Motor neuron (in vitro differentiated cells): ENCODE measurements at regions of chr9 and their contacts with region 1.

Region 1: GRCh38 chr9:81848472-81848871 is 79.8 kb upstream of the SPATA31D4 start:
- ATAC-seq: peak in 1 of 8 experiments; percentile 26
- H3K4me3 ChIP-seq: no peak overlapping the region
- H3K27ac ChIP-seq: no peak overlapping the region
- H3K4me1 ChIP-seq: peaks cover 3 to 6% of the 10 kb centered on the region in 2 donors

Region 2: DNA sequence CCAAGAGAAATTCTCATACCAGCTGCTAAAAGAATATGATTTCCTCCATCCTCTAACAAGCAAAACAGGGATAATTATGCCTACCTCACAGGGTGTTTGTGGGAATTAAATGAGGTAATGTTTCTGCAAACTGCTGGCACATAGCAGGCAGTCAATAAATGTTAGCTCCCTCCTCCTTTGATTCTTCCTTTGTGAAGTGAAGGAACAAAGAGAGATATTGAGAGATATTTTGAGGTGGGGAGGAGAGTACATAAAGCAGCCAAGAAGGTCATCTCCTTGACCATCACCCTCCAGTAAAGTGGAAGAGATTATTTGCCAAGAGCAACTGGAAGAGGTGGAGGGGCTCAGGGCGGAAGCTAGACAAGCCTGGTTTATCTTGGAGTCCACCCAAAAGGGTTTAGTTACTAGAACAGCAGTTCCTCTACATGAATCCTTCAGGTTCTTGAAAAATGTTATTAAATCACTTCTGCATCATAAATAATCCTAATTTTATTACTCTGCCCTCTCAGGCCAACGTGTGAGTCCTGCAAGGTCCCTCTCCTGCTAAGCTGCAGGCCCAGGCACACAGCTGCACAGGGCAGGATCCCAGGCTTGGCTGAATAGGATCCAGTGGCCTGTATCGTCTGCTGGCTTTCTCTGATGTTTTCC is 124.1 kb before region 1 on chr9:
- in situ Hi-C with region 1: loop called in 1 of 9 experiments (anchors 25 kb)
- ATAC-seq: peak in 1 of 8 experiments; percentile 19
- H3K4me3 ChIP-seq: no peak overlapping the region
- H3K27ac ChIP-seq: no peak overlapping the region
- H3K4me1 ChIP-seq: no peaks in the 10 kb centered on the region

Region 3: DNA sequence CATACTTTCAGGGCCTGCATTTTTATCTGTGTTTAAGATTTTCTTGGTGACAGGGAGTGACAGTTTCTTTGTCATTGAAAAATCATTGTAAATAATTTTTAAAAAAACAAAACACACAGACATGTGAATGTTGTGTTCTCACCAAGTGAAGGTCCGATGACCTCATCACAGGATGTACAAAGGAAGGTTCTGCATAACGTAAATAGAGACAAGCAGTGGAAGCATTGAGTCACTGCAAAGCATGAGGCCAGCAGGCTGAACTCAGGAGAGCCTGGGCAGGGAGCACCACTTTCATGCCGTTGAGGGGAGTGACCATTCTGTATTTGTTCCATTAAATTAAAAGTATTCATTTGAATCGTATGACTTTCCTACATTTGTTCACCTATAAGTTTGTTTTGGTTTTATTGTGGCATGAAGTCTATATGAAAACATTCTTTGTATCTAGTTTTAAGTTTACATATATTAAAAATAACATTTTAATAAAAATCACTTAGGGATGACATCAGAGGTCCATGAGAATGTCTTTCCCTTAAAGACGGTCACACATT is 88.7 kb before region 1 on chr9:
- in situ Hi-C with region 1: no loop called
- ATAC-seq: peak; percentile 37 to 99 (median 88)
- H3K4me3 ChIP-seq: no peak overlapping the region
- H3K27ac ChIP-seq: no peak overlapping the region
- H3K4me1 ChIP-seq: peaks cover 3 to 8% of the 10 kb centered on the region in 2 donors

Region 4: DNA sequence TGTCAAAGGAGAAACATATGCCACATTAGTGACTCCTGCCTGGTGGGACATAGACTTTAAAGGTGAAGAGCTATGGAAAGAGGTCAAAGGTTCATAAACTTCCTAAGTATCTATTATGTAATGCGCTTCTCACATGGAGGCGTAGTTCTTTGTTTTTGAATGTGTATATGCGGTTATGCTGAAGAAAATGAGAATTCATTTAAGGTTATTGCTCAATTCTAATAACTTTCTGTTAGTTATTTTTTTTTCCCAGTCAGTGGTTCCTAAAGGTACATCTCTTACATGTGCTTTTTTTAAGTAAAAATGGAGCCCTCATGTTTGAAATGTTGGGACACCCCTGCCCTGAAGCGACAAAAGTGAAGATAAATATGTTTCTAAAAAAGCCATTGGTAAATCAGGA is 296.3 kb after region 1 on chr9:
- in situ Hi-C with region 1: no loop called
- ATAC-seq: no peak
- H3K4me3 ChIP-seq: no peak overlapping the region
- H3K27ac ChIP-seq: no peak overlapping the region
- H3K4me1 ChIP-seq: peaks cover 16 to 18% of the 10 kb centered on the region in 2 donors

Region 5: DNA sequence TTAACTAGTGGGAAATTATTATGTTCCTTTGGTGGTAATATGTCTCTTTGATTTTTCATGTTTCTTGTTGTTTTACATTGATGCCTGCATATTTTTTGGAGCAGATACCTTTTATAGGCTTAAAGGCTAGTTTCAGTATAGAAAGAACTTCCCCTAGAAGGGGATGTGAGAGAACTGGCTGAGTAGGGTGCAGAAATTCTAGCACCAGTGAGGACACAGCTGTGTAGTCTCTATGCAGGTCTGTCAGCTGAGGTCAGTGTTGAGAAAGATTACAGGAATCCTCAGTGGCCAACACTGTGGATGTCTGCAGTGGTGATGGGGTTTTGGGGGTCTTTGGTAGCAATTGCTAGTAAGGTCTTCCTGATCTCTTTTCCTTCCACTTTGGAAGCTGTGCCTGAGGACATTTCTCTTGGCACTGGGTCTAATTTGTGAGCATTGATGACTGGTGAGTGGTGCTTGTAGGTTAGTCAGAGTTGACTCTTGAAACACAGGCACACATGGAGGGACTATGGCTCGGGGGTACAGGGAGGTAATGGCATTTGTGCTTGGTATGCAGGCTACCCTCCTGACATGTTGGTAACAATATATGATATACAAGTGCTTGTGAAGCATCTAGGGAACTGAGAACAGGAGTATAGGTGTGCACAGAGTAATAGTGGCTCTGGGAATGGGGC is 361.5 kb after region 1 on chr9:
- in situ Hi-C with region 1: no loop called
- ATAC-seq: no peak
- H3K4me3 ChIP-seq: no peak overlapping the region
- H3K27ac ChIP-seq: no peak overlapping the region
- H3K4me1 ChIP-seq: no peaks in the 10 kb centered on the region